CD8-positive, alpha-beta T cell (primary cell): ENCODE measurements at regions of chr16 and their contacts with region 1.

Region 1: DNA sequence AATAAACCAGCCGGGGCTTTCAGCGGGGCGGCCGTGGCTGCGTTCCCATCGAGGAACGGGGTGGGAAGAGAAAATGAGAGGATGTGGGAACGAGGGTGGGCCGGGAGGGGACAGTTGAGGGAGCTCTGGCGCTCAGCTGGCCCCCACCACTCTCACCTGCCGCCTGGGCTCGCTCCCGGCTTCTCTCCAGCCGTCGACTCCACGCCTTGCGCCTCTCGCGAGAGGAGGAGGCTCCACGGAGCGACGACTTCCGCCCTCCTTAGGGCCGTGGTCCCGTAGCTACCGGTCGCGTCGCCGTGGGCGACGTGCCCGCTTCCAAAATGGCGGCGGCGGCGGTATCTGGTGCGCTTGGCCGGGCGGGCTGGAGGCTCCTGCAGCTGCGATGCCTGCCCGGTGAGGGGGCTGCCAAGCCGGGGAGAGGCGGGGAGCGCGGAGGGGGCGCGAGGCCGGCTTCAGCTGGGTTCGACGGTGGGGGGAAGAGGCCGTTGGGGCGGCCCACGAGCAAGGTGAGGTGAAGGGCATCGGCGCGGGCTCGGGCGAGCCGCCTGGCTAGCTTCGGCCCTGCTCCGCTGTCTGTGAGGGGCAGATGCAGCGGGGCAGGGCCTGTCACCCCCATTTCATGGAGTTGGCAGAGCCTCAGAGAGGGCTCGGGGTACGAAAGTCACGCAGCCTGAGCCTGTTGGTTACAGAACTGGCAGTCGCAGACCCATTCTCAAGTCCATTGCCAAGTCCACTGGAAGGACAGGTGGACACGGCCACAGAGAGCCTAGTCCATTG is at the starts of genes CIAPIN1 and COQ9:
- DNase-seq: peak; percentile 85 to 97 (median 92)
- ATAC-seq: peak; percentile 98
- H3K4me3 ChIP-seq: peak within 1 kb of the TSS; percentile 93 to 96
- H3K4me3 Mint-ChIP-seq: peak within 1 kb of the TSS; percentile 91
- H3K27ac ChIP-seq: peak within 1 kb of the TSS; percentile 79 to 83
- H3K27ac Mint-ChIP-seq: peak within 1 kb of the TSS; percentile 93
- H3K4me1 ChIP-seq: peaks cover 20% of the 10 kb centered on the region
- H3K4me1 Mint-ChIP-seq: peaks cover 53% of the 10 kb centered on the region
- H3K27me3 ChIP-seq: no peaks in the 10 kb centered on the region
- H3K27me3 Mint-ChIP-seq: no peaks in the 10 kb centered on the region
- CTCF ChIP-seq: no peak
- total RNA-seq, gene CIAPIN1: 28.6 to 29.7 TPM
- total RNA-seq, gene COQ9: 8.1 to 11.7 TPM

Region 2: DNA sequence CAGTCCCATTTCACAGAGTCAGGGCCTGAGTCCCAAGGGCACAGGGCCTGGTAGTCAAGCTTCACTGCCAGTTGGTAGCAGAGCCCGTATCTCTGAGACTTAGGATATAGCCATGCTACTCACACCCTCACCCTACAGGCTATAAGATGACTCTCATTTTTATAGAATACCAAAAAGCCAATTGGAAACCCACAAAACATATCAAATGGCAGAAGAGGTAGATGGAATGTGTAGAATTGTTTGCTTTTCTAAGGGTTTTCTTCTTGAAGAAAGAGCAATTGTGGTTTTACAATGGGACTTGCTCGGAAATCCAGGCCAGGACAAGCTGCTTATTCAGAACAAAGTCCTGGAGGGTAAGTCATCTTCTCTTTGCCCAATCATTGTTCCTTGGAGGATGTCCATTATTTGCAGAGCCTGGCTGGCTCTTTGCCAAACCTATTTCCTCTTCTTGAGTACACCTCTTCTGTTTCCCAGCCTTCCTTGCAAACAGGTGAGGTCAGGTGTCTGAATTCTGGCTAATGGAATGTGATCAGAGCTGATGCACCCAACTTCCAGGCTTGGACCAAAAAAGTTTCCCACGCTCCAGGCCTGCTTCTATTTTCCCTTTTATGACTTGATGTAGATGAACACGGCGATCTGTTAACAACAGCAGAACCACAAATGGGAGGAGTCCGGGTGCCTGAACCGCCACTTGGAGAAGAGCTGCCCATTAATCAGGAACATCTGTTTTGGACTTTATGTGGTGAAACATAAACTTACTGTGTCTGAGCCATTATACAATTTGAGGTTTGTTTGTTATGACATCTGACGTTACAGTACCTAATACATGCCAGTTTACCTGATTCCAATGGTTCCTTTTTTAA is 105.7 kb before region 1 on chr16:
- CTCF ChIA-PET with region 1: no interaction called
- POLR2A ChIA-PET with region 1: no interaction called
- intact Hi-C with region 1: no loop called
- DNase-seq: no peak
- ATAC-seq: no peak
- H3K4me3 ChIP-seq: no peak overlapping the region
- H3K4me3 Mint-ChIP-seq: no peak overlapping the region
- H3K27ac ChIP-seq: no peak overlapping the region
- H3K27ac Mint-ChIP-seq: no peak overlapping the region
- H3K4me1 ChIP-seq: peaks cover 10% of the 10 kb centered on the region
- H3K4me1 Mint-ChIP-seq: peaks cover 12% of the 10 kb centered on the region
- H3K27me3 ChIP-seq: peaks cover 0 to 2% of the 10 kb centered on the region in 2 experiments
- H3K27me3 Mint-ChIP-seq: peaks cover 43% of the 10 kb centered on the region
- CTCF ChIP-seq: no peak

Region 3: GRCh38 chr16:57422026-57422944 is 25.1 kb before region 1 on chr16:
- CTCF ChIA-PET with region 1: interaction called, 15 read pairs
- POLR2A ChIA-PET with region 1: interaction called, 5 read pairs
- intact Hi-C with region 1: loop called (anchors 1 to 2 kb)
- DNase-seq: no peak
- ATAC-seq: no peak
- H3K4me3 ChIP-seq: no peak overlapping the region
- H3K4me3 Mint-ChIP-seq: no peak overlapping the region
- H3K27ac ChIP-seq: no peak overlapping the region
- H3K27ac Mint-ChIP-seq: no peak overlapping the region
- H3K4me1 ChIP-seq: peaks cover 18% of the 10 kb centered on the region
- H3K4me1 Mint-ChIP-seq: peaks cover 19% of the 10 kb centered on the region
- H3K27me3 ChIP-seq: no peaks in the 10 kb centered on the region
- H3K27me3 Mint-ChIP-seq: no peaks in the 10 kb centered on the region
- CTCF ChIP-seq: no peak

Region 4: DNA sequence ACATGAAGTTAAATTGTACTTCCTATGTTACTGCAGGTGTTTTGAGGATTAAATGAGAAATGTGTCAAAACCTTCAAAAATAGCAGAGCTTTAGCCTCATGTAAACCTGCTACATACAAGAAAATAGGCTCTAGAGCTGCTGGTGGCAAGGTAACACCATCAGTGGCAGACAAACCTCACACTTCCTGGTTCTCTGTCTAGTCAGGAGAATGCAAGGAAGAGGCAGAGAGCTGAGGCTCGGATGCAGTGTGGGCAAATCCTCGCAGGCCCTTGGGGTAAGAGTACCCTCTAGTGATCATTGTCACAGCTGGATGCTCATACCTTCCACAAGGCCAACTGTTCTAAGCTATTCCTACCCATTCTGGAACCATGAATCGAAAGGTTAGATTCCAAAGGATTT is 14.4 kb before region 1 on chr16:
- CTCF ChIA-PET with region 1: interaction called, 7 read pairs
- POLR2A ChIA-PET with region 1: interaction called, 12 read pairs
- intact Hi-C with region 1: no loop called
- DNase-seq: peak in 1 of 9 experiments; percentile 28
- ATAC-seq: peak; percentile 44
- H3K4me3 ChIP-seq: no peak overlapping the region
- H3K4me3 Mint-ChIP-seq: peak overlapping the region; percentile 49
- H3K27ac ChIP-seq: peak overlapping the region in 1 of 2 experiments; percentile 49
- H3K27ac Mint-ChIP-seq: peak overlapping the region; percentile 88
- H3K4me1 ChIP-seq: peaks cover 37% of the 10 kb centered on the region
- H3K4me1 Mint-ChIP-seq: peaks cover 38% of the 10 kb centered on the region
- H3K27me3 ChIP-seq: no peaks in the 10 kb centered on the region
- H3K27me3 Mint-ChIP-seq: no peaks in the 10 kb centered on the region
- CTCF ChIP-seq: no peak

Region 5: DNA sequence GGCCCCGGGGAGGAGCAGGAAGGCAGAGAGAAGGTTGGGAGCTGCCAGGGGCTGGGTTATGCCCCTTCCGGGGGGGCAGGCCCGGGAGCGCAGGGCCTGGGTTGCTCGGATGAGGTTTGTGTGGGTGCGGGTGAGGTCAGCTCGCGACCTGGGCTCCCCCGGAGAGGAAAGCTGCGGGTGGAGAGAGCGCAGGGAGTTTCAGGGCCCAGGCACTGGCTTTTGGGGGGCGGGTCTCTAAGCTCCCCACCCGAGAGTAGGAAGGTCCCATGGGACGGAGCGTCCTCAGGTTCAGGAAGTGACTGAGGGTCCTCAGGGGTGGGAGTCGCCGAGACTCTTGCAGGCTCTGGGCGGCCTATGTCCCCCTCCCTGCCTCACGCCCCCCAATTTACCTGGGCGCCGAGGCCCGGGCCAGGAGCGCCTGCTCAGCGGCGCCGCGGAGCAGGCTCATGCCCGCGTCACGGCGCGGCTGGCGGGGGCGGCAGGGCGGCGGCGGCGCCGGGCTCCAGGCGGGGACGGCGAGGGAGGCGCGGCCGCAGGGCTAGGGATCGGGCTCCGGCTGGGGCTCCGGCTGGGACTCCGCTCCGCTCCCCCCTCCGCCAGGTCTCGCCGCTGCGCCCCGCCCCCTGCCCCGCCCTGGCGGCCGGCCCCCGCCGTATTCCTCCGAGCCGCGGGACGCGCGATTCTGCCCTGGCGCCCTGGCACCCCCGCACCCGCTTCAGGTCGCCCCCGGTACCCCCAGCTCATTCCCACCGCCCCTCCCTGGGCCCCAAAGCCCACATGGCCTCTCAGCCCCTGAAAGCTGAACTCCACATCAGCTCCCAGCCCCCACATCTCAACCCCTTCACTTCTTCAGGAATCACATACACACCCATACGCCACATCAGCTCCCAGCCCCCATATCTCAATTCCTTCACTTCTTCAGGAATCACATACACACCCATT is 38.8 kb after region 1 on chr16 and contains the start of gene DOK4:
- CTCF ChIA-PET with region 1: interaction called, 3 read pairs
- POLR2A ChIA-PET with region 1: interaction called, 3 read pairs
- intact Hi-C with region 1: loop called in 1 of 2 experiments (anchors 2 kb)
- DNase-seq: peak; percentile 60 to 86 (median 77)
- ATAC-seq: peak; percentile 97
- H3K4me3 ChIP-seq: peak within 1 kb of the TSS; percentile 68 to 72
- H3K4me3 Mint-ChIP-seq: peak within 1 kb of the TSS; percentile 86
- H3K27ac ChIP-seq: no peak within 1 kb of the TSS
- H3K27ac Mint-ChIP-seq: peak within 1 kb of the TSS; percentile 69
- H3K4me1 ChIP-seq: peaks cover 18% of the 10 kb centered on the region
- H3K4me1 Mint-ChIP-seq: peaks cover 25% of the 10 kb centered on the region
- H3K27me3 ChIP-seq: no peaks in the 10 kb centered on the region
- H3K27me3 Mint-ChIP-seq: no peaks in the 10 kb centered on the region
- CTCF ChIP-seq: no peak
- total RNA-seq, gene DOK4: 1.7 to 1.9 TPM

Region 6: GRCh38 chr16:57639172-57639887 is 192.0 kb after region 1 on chr16:
- CTCF ChIA-PET with region 1: no interaction called
- POLR2A ChIA-PET with region 1: no interaction called
- intact Hi-C with region 1: no loop called
- DNase-seq: peak in 4 of 9 experiments; percentile 53 to 79 (median 61)
- ATAC-seq: peak; percentile 74
- H3K4me3 ChIP-seq: no peak overlapping the region
- H3K4me3 Mint-ChIP-seq: no peak overlapping the region
- H3K27ac ChIP-seq: no peak overlapping the region
- H3K27ac Mint-ChIP-seq: peak overlapping the region; percentile 45
- H3K4me1 ChIP-seq: peaks cover 6% of the 10 kb centered on the region
- H3K4me1 Mint-ChIP-seq: peaks cover 5% of the 10 kb centered on the region
- H3K27me3 ChIP-seq: no peaks in the 10 kb centered on the region
- H3K27me3 Mint-ChIP-seq: no peaks in the 10 kb centered on the region
- CTCF ChIP-seq: no peak